ENCODE measurements at regions of chr20 and their contacts with region 1.

Region 1: GRCh38 chr20:37192137-37192854 is 12.9 kb upstream of the MROH8 start:
- DNase-seq: peak; percentile 82
- H3K4me3 Mint-ChIP-seq: no peak overlapping the region
- H3K27ac Mint-ChIP-seq: no peak overlapping the region
- H3K4me1 Mint-ChIP-seq: peaks cover 35% of the 10 kb centered on the region
- H3K27me3 Mint-ChIP-seq: no peaks in the 10 kb centered on the region
- CTCF ChIP-seq: peak; percentile 80

Region 2: DNA sequence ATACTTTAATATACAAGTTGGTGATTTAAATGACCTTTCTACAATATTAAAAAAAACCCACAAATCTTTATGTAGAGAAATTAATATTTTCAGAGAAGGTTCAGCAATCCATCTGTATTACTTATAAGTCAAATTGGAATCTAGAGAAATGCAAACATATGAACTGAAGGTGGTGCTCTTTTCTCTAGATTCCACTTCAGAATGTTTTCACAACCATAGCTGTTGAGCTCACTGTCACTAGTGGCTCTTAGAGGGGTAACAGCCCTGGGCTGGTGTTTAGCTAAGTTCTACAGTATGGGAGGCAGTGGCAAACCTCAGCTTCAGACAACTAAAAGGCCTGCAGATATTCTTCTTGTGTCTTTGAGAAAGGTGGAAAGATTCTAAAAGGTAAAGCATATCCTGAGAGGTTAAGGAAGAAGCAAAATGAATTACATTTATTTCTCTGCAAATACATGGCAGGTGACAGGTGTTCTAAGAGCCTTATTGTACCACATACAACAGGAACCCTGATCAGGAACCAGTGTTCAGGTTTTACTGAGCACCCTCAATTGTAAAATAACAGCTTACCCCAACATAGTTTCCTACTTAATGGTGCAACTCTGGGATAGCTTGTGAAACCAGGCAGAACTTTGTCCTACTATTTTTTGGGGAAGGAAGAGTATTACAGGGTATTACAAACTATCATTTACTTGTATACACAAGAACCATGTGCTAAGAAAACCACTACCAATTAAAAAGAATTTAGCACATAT is 184.2 kb before region 1 on chr20:
- CTCF ChIA-PET with region 1: interaction called, 16 read pairs
- POLR2A ChIA-PET with region 1: no interaction called
- intact Hi-C with region 1: loop called (anchors 5 kb)
- DNase-seq: peak; percentile 16
- H3K4me3 Mint-ChIP-seq: no peak overlapping the region
- H3K27ac Mint-ChIP-seq: no peak overlapping the region
- H3K4me1 Mint-ChIP-seq: no peaks in the 10 kb centered on the region
- H3K27me3 Mint-ChIP-seq: no peaks in the 10 kb centered on the region
- CTCF ChIP-seq: peak; percentile 23

Region 3: GRCh38 chr20:37202267-37202943 is 10.1 kb after region 1 on chr20:
- CTCF ChIA-PET with region 1: interaction called, 91 read pairs
- POLR2A ChIA-PET with region 1: interaction called, 5 read pairs
- intact Hi-C with region 1: no loop called
- DNase-seq: peak; percentile 74
- H3K4me3 Mint-ChIP-seq: no peak overlapping the region
- H3K27ac Mint-ChIP-seq: peak overlapping the region; percentile 62
- H3K4me1 Mint-ChIP-seq: no peaks in the 10 kb centered on the region
- H3K27me3 Mint-ChIP-seq: no peaks in the 10 kb centered on the region
- CTCF ChIP-seq: peak; percentile 66

Region 4: GRCh38 chr20:37209661-37210314 is 17.5 kb after region 1 on chr20:
- CTCF ChIA-PET with region 1: interaction called, 22 read pairs
- POLR2A ChIA-PET with region 1: interaction called, 5 read pairs
- intact Hi-C with region 1: no loop called
- DNase-seq: peak; percentile 56
- H3K4me3 Mint-ChIP-seq: no peak overlapping the region
- H3K27ac Mint-ChIP-seq: no peak overlapping the region
- H3K4me1 Mint-ChIP-seq: no peaks in the 10 kb centered on the region
- H3K27me3 Mint-ChIP-seq: no peaks in the 10 kb centered on the region
- CTCF ChIP-seq: no peak

Region 5: DNA sequence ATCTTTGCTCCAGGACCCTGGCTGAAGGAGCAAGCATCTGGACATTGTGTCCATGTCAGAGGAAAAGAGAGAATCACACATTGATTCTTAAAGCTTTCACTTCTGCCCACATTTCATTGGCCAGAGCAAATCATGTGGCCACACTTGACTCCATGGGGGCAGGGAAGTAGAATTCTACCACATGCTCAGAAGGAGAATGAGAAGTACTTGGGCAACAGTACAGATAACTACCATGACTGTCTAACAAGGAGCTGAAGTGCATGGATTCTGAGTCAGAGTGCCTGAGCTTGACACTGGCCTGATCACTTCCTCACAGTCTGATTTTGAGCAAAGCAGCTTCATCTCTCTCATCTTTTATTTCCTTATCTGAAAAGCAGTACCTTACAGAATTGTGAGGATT is 30.8 kb after region 1 on chr20:
- CTCF ChIA-PET with region 1: interaction called, 11 read pairs
- POLR2A ChIA-PET with region 1: no interaction called
- intact Hi-C with region 1: no loop called
- DNase-seq: peak; percentile 46
- H3K4me3 Mint-ChIP-seq: no peak overlapping the region
- H3K27ac Mint-ChIP-seq: no peak overlapping the region
- H3K4me1 Mint-ChIP-seq: no peaks in the 10 kb centered on the region
- H3K27me3 Mint-ChIP-seq: no peaks in the 10 kb centered on the region
- CTCF ChIP-seq: no peak

Region 6: DNA sequence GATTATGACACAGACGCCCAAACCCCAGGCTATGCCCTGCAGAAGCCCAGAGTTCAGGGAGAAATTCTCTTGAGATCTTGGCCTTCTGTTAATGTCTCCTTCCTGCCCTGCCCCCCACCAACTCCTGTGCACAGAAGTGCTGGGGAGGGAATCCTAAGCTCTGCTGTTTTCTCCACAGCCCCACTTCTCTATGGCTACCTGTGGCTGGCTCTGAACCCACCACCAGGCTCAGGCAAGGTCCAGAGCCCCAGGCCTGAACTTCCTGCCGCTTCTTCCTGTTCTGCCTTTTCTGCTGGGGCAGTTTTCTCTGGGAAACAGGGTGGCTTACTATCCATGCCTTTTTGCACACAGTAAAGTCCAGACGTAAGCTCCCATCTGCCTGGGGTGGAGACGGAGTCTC is 251.3 kb after region 1 on chr20:
- CTCF ChIA-PET with region 1: no interaction called
- POLR2A ChIA-PET with region 1: no interaction called
- intact Hi-C with region 1: no loop called
- DNase-seq: no peak
- H3K4me3 Mint-ChIP-seq: no peak overlapping the region
- H3K27ac Mint-ChIP-seq: no peak overlapping the region
- H3K4me1 Mint-ChIP-seq: no peaks in the 10 kb centered on the region
- H3K27me3 Mint-ChIP-seq: peaks cover 47% of the 10 kb centered on the region
- CTCF ChIP-seq: no peak

Measured in MCF 10A (cell line).